Left colon (tissue), 2 donors: ENCODE measurements at regions of chr1 and their contacts with region 1.

Region 1: DNA sequence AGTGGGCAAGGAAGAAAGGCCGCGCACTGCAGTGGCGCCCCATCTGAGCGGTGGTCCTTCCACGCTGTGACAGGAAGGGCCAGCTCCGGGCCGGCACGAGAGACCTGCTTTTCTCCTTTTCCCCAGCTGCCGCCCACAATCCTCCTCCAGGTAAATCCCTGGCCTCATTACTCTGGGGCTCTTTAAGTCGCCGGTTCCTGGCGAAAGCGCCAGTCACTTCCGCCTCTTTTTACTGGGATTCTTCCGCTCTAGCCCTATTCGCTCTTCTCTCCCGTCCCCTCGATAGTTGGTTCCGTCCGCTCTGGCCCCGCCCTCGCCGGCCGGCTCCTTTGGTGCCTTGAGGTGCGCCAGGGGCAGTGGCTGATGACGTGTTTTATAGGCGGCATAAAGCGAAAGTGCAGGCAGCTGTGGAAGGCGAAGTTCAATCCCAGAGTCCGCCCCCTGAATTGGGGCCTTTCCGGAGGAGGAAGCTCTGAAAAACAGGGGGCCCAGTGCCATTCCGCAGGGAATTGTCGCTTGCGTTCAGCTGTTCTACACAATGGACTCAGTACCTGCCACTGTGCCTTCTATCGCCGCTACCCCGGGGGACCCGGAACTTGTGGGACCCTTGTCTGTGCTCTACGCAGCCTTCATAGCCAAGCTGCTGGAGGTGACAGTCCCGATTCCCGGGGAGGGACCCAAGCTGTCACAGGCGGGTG is 26.2 kb downstream of the MIA3 start:
- DNase-seq: peak; percentile 98
- ATAC-seq: peak; percentile 96

Region 2: DNA sequence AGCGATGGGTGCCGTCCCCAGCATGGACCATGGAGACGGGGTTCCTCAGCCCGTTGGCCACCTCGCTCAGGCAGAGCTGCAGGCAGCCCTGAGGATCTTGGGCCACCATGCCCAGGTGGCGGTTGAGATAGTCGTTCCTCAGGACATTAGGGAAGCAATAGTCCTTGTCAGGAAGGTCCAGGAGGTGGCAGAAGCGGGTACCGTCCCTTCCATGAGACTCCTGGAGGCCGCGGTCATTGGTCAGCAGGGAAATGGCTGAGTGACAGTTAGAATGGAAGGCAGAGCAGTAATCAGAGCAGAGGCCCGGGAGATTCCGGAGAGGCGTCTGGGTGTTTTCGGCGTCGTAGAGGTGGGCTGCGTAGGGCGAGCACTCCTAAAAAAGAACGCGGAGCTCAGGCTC is 100.3 kb before region 1 on chr1:
- intact Hi-C with region 1: no loop called
- DNase-seq: no peak
- ATAC-seq: peak; percentile 34

Region 3: DNA sequence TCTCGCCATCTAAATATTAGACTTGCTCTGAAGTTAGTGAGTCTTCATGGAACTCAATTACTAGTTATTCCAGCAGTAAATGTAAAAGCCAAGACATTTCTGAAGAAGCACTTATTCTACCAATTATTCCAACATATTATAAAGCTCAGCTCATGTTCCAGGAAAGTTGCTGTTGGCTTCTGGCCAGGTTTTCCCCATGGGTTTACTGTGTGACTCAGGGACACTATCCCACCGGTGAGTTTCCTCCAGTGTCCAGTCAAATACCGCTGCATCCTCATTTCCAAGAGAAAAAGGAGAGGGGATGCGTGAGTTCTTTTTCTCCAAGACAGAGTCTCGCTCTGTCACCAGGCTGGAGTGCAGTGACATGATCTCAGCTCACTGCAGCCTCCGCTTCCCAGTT is 86.9 kb before region 1 on chr1:
- intact Hi-C with region 1: no loop called
- DNase-seq: no peak
- ATAC-seq: no peak

Region 4: GRCh38 chr1:222713091-222713961 is 69.2 kb after region 1 on chr1:
- intact Hi-C with region 1: loop called in 1 of 2 experiments (anchors 5 kb)
- DNase-seq: peak; percentile 94 to 95
- ATAC-seq: peak; percentile 83